GM10248 (cell line): ENCODE measurements at regions of chr19 and their contacts with region 1.

Region 1: GRCh38 chr19:42440357-42441048 is 2.2 kb downstream of the CXCL17 start:
- DNase-seq: peak; percentile 75
- CTCF ChIP-seq: peak; percentile 88

Region 2: DNA sequence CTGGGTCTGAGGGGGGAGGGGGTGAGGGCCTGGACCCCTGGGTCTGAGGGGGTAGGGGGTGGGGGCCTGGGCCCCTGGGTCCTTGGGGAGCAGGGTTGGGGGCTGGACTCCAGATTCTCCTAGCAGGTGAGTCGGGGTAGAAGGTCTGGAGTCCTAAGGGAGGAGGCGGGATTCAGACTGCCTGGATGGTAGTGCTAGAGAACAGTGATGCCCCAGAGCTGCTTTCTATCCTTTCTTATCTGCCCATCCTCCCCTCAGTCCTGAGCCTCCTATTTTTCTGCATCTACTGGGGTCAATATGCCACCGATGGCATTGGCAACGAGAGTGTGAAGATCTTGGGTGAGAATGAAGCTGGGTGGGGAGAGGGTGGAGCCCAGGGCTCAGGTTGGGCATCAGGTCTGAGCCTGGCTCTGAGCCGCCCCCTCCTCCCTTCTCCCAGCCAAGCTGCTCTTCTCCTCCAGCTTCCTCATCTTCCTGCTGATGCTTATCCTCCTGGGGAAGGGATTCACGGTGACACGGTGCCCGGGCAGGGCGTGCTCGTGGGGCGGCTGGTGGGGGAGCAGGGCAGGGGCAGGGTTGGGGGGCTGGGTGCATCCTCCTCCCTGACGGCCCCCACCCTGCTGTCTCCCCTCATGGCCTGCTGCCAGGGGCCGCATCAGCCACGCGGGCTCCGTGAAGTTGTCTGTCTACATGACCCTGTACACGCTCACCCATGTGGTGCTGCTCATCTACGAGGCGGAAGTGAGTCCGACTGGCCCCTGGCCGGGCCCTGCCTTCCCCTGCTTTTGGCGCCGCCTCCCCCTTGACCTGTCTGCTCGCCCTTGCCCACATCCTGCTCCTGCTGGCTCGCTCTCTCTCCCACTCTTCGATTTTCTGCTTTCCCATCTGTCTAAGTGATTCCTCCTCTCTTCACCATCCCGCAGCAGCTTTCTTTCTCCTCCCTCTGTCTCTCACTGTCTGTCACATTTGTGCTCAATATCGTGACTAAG is 124.0 kb before region 1 on chr19:
- CTCF ChIA-PET with region 1: no interaction called
- POLR2A ChIA-PET with region 1: no interaction called
- DNase-seq: peak; percentile 74
- CTCF ChIP-seq: no peak

Region 3: GRCh38 chr19:42423462-42424344 is 16.8 kb before region 1 on chr19:
- CTCF ChIA-PET with region 1: interaction called, 55 read pairs
- POLR2A ChIA-PET with region 1: interaction called, 7 read pairs
- DNase-seq: peak; percentile 97
- CTCF ChIP-seq: no peak

Region 4: GRCh38 chr19:42461700-42462324 is 21.3 kb after region 1 on chr19:
- CTCF ChIA-PET with region 1: interaction called, 18 read pairs
- POLR2A ChIA-PET with region 1: no interaction called
- DNase-seq: no peak
- CTCF ChIP-seq: no peak

Region 5: GRCh38 chr19:42498169-42498757 is 57.8 kb after region 1 on chr19:
- CTCF ChIA-PET with region 1: interaction called, 12 read pairs
- POLR2A ChIA-PET with region 1: no interaction called
- DNase-seq: no peak
- CTCF ChIP-seq: no peak

Region 6: DNA sequence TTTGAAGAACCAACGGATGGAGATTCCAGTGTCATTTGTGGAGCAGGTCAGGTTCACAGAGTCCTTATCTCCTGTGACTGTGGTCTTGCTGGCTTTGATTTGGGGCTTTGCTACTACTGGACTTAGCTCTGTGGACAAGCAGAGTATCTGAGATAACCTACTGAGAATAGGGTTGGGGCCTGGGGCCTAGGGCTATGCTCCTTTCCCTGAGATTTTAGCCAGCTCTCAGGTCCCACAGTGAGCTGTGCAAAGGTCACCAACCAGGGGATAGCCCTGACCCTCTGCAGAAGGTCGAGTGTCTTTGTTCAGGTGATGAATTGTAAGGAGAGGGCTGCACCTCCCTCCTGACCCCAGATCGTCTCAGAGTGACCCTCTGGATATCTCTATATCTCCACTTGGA is 78.6 kb after region 1 on chr19:
- CTCF ChIA-PET with region 1: interaction called, 12 read pairs
- POLR2A ChIA-PET with region 1: no interaction called
- DNase-seq: no peak
- CTCF ChIP-seq: no peak